ENCODE measurements at regions of chr22 and their contacts with region 1.

Region 1: DNA sequence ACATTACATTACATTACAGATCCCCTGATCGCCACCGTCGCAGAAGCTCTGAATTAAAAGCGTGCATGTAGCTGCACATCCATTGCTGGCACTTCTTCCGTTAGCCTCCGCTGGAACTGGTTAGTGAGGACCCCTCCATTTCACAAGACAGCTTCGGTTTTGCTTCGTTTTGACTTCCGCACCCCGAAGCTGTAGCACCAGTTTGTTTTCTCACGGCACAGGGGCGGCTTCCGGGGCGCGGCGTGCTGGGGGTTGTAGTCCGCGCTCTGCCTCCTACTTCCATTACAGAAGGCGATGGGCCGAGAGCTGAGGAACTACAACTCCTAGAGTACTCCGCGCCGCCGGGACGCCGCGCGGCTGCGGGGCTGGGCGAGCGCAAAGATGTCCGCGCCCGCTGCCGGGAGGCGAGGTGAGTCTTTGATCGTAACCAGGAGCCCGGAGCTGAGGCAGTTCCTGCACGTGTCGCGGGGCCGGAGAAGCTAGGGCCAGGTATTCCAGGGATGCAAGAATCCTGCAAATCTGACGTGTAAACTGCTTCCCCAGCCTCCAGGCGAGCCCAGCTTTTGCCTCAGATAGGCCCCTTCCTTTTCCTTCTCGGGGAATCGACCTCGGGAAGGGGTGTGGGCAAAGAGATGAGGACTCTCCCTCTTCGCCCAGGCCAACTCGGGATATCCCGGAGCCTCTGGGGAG is at the start of gene PEX26:
- DNase-seq: peak; percentile 91 to 98 (median 96)
- ATAC-seq: peak; percentile 99
- H3K4me3 ChIP-seq: peak within 1 kb of the TSS; percentile 71 to 98
- H3K27ac ChIP-seq: peak within 1 kb of the TSS; percentile 79 to 81
- H3K4me1 ChIP-seq: peaks cover 16 to 30% of the 10 kb centered on the region in 2 donors
- H3K27me3 ChIP-seq: no peaks in the 10 kb centered on the region
- CTCF ChIP-seq: no peak
- polyA plus RNA-seq, gene PEX26: 21.8 to 28.5 (median 26.0) TPM

Region 2: DNA sequence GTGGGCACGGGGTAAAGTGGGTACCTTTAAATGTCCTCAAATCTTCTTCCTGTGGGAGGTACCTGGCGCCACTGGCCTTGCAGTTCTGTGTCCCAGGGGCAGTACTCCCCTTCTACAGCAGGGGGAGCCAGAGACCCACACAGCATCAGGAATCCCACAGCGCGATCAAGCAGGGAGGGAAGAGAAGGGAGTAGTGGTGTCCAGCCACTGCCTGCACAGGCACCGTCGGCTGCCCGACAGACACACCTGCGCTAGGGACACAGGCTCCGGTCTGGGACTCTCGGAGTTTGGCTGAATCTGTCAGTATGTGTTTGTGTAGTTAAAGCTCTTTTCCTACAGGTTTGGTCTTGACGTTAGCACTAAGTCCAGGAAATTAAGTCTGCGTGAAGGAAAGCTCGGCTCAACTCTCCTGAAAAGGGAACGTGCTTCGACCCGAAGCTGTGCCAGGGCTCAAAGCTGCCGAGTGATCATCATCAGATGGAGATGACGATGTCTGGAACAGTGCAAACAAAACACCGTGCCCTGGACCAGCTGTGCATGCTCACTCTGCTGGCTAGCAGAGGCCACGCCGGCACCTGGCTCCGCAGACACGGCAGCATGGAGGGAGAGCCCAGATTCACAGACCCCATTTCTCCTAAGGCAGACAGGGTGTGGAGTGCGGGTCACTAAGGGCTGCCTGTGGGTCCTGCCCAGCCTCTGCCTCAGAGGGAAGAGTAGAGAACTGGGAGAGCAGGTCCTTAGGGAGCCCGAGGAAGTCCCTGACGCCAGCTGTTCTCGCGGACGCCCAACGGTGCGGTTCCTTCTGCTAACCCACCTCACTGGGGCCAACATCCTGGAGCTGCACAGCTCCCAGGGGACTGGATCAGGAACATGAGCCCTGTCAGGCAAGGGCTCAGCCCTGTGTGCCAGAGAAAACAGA is 247.5 kb before region 1 on chr22:
- intact Hi-C with region 1: loop called in 1 of 2 experiments (anchors 5 kb)
- DNase-seq: peak; percentile 74 to 87 (median 84)
- ATAC-seq: peak; percentile 99
- H3K4me3 ChIP-seq: no peak overlapping the region
- H3K27ac ChIP-seq: no peak overlapping the region
- H3K4me1 ChIP-seq: no peaks in the 10 kb centered on the region
- H3K27me3 ChIP-seq: peaks cover 0 to 5% of the 10 kb centered on the region in 2 donors
- CTCF ChIP-seq: peak; percentile 99

Region 3: GRCh38 chr22:18024276-18024947 is 53.4 kb before region 1 on chr22 and contains the start of gene MICAL3:
- intact Hi-C with region 1: loop called in 1 of 2 experiments (anchors 10 kb)
- DNase-seq: peak in 2 of 4 donors; percentile 40 to 74
- ATAC-seq: peak; percentile 95
- H3K4me3 ChIP-seq: peak within 1 kb of the TSS; percentile 39 to 47
- H3K27ac ChIP-seq: no peak within 1 kb of the TSS
- H3K4me1 ChIP-seq: peaks cover 0 to 17% of the 10 kb centered on the region in 2 donors
- H3K27me3 ChIP-seq: peaks cover 16 to 69% of the 10 kb centered on the region in 2 donors
- CTCF ChIP-seq: peak; percentile 31 to 54
- polyA plus RNA-seq, gene MICAL3: 46.0 to 64.8 (median 59.2) TPM